ENCODE measurements at regions of chr13 and their contacts with region 1.

Region 1: DNA sequence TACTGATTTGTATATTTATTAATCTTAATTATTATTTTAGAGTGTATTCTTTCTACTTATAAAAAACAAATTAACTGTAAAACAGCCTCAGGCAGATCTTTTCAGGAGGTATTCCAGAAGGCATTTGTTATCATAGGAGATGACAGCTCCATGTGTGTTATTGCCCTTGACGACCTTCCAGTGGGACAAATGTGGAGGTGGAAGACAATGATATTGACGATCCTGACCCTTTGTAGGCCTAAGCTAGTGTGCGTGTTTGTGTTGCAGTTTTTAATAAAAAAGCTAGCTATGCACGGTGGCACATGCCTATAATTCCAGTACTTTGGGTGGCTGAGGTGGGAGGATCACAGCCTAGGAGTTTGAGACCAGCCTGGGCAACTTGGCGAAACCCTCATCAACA is 46.7 kb downstream of the NDFIP2 start:
- DNase-seq: no peak
- H3K4me3 ChIP-seq: no peak overlapping the region
- H3K27ac ChIP-seq: no peak overlapping the region
- H3K4me1 ChIP-seq: peaks cover 4 to 29% (median 5%) of the 10 kb centered on the region in 3 donors
- H3K27me3 ChIP-seq: no peaks in the 10 kb centered on the region
- CTCF ChIP-seq: no peak
- POLR2A ChIP-seq: no peak

Region 2: GRCh38 chr13:79491715-79492114 is 36.0 kb before region 1 on chr13:
- intact Hi-C with region 1: loop called (anchors 2 kb)
- DNase-seq: no peak
- H3K4me3 ChIP-seq: peak overlapping the region in 2 of 4 donors; percentile 7 to 31
- H3K27ac ChIP-seq: peak overlapping the region; percentile 77 to 86 (median 82)
- H3K4me1 ChIP-seq: peaks cover 17 to 89% (median 39%) of the 10 kb centered on the region in 3 donors
- H3K27me3 ChIP-seq: no peaks in the 10 kb centered on the region
- CTCF ChIP-seq: no peak
- POLR2A ChIP-seq: no peak